Activated T-helper 2 cell treated with anti-CD3 and anti-CD28 coated beads, Interferon-gamma antibody, Interleukin-2, Interleukin-4, amounts not matched to agents 10 μg/mL and 5 μg/mL and 100 μg/mL, durations not matched to agents 14 hours and 24 hours and 36 hours (primary cell): ENCODE measurements at regions of chr11 and their contacts with region 1.

Region 1: DNA sequence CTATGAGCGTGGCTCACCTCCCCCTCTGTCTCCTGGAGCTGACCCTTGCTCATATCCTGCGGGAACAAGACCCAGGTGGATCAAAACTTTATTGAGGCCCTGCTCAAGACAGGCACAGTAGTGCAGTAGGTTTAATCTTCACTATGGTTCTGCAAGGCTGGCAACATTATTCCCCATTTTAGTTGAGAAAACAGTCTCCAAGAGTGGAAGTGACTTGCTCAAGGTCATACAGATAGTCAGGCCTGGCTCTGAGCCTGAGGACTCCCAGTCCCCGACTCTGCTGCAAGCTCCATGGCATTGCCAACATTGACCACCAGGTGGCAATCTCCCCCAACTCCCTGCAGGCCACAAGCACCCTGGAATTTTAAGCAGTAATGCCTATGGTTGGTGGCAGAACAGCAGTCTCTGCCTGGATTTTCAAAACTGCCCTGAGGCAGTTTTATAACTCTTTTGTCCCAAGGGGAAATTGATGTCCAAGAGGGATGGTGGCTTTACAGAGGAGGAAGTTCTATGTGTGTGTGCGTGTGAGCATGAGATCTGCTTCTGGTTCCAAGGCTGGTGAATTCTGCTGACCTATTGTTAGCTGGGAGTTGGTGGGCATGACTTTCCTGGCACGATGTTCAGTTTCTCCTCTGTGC is 34.1 kb downstream of the NEU3 start:
- DNase-seq: peak; percentile 60
- H3K4me3 Mint-ChIP-seq: no peak overlapping the region
- H3K27ac Mint-ChIP-seq: no peak overlapping the region
- H3K4me1 Mint-ChIP-seq: peaks cover 1% of the 10 kb centered on the region
- H3K27me3 Mint-ChIP-seq: no peaks in the 10 kb centered on the region

Region 2: GRCh38 chr11:75204685-75205563 is 182.0 kb after region 1 on chr11:
- intact Hi-C with region 1: loop called (anchors 5 kb)
- DNase-seq: peak; percentile 67
- H3K4me3 Mint-ChIP-seq: no peak overlapping the region
- H3K27ac Mint-ChIP-seq: no peak overlapping the region
- H3K4me1 Mint-ChIP-seq: no peaks in the 10 kb centered on the region
- H3K27me3 Mint-ChIP-seq: peaks cover 16% of the 10 kb centered on the region

Region 3: GRCh38 chr11:75248690-75249268 is 225.9 kb after region 1 on chr11:
- intact Hi-C with region 1: loop called (anchors 1 kb)
- DNase-seq: peak; percentile 78
- H3K4me3 Mint-ChIP-seq: no peak overlapping the region
- H3K27ac Mint-ChIP-seq: no peak overlapping the region
- H3K4me1 Mint-ChIP-seq: no peaks in the 10 kb centered on the region
- H3K27me3 Mint-ChIP-seq: peaks cover 20% of the 10 kb centered on the region